ENCODE measurements at regions of chr1 and their contacts with region 1.

Region 1: GRCh38 chr1:225777583-225778336 is at the start of gene SRP9:
- DNase-seq: peak; percentile 99
- H3K4me3 Mint-ChIP-seq: no peak within 1 kb of the TSS
- H3K27ac Mint-ChIP-seq: no peak within 1 kb of the TSS
- H3K4me1 Mint-ChIP-seq: peaks cover 25% of the 10 kb centered on the region
- H3K27me3 Mint-ChIP-seq: no peaks in the 10 kb centered on the region
- total RNA-seq, gene SRP9: 294 to 314 TPM

Region 2: DNA sequence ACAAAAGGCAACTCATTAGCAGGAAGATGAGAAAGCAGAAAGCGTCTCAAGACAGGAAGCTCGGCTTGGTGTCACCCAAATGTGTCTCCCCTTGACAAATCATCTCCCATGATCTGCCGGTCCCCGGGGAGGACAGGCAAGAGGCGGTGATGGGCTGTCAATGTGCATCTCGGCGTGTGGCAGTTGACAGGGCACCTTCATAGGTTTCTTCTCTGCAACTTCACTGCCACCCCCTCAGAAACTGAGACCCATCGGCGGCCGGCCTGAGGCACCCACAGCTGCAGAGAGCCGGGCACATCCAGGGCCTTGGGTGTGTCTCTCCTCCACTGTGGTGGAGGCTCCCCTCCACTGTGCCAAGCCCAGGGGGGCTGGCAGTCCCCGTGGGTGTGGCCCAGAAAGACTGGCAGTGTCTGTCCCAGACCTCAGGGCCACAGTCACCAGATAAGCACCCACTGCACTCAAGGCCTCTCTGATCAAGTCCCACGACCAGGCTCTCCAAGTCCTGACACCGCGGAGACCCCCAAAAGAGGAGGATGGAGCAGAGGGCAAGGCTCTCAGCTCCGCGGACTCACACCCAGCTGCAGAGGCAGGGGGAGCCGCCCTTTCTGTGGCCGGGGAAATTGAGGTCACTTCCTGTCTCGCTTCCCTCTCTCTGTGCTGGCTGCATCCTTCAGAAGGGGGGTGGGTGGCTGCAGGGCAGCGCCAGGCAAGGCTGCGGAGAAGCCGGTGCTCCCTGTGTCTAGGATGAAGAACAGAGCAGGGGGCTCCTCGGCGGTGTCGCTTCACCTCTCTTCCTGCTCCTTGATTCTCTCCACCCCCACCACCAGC is 310.4 kb before region 1 on chr1:
- CTCF ChIA-PET with region 1: interaction called, 13 read pairs
- POLR2A ChIA-PET with region 1: interaction called, 15 read pairs
- intact Hi-C with region 1: no loop called
- DNase-seq: peak; percentile 91
- H3K4me3 Mint-ChIP-seq: peak overlapping the region; percentile 92
- H3K27ac Mint-ChIP-seq: peak overlapping the region; percentile 99
- H3K4me1 Mint-ChIP-seq: peaks cover 26% of the 10 kb centered on the region
- H3K27me3 Mint-ChIP-seq: no peaks in the 10 kb centered on the region

Region 3: DNA sequence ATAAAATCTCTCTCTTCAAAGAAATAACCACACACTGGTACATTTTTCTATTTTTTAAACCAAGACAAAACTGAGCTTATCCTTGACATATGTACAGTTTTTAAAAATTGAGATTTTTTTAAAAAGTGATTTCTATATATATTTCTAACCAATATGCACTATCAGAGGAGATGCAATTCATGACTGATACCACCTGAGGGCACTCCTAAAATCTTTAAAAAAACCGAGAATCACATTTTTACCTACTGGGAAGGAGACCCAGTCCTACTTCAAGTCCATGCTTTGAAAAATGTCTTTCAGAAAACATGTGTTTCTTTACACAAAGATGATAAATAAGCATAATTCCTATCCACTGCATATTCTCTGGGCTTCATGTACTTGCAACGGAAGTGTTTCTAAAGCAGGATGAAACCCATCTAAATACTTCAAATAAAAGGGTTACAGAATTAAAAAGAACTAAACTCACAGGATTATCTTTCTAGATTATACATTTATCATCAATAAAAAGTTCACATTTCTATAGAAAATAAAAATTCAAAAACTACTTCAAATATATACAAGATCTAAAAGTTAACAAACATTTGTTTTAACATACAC is 223.4 kb before region 1 on chr1:
- CTCF ChIA-PET with region 1: interaction called, 3 read pairs
- POLR2A ChIA-PET with region 1: no interaction called
- intact Hi-C with region 1: loop called (anchors 5 kb)
- DNase-seq: no peak
- H3K4me3 Mint-ChIP-seq: no peak overlapping the region
- H3K27ac Mint-ChIP-seq: no peak overlapping the region
- H3K4me1 Mint-ChIP-seq: no peaks in the 10 kb centered on the region
- H3K27me3 Mint-ChIP-seq: peaks cover 3% of the 10 kb centered on the region

Region 4: GRCh38 chr1:225809842-225810578 is 32.2 kb after region 1 on chr1 and contains the start of gene EPHX1:
- CTCF ChIA-PET with region 1: interaction called, 5 read pairs
- POLR2A ChIA-PET with region 1: interaction called, 5 read pairs
- intact Hi-C with region 1: loop called (anchors 2 kb)
- DNase-seq: peak; percentile 81
- H3K4me3 Mint-ChIP-seq: peak within 1 kb of the TSS; percentile 73
- H3K27ac Mint-ChIP-seq: no peak within 1 kb of the TSS
- H3K4me1 Mint-ChIP-seq: peaks cover 11% of the 10 kb centered on the region
- H3K27me3 Mint-ChIP-seq: peaks cover 2% of the 10 kb centered on the region
- total RNA-seq, gene EPHX1: 2.6 to 2.8 TPM

Region 5: DNA sequence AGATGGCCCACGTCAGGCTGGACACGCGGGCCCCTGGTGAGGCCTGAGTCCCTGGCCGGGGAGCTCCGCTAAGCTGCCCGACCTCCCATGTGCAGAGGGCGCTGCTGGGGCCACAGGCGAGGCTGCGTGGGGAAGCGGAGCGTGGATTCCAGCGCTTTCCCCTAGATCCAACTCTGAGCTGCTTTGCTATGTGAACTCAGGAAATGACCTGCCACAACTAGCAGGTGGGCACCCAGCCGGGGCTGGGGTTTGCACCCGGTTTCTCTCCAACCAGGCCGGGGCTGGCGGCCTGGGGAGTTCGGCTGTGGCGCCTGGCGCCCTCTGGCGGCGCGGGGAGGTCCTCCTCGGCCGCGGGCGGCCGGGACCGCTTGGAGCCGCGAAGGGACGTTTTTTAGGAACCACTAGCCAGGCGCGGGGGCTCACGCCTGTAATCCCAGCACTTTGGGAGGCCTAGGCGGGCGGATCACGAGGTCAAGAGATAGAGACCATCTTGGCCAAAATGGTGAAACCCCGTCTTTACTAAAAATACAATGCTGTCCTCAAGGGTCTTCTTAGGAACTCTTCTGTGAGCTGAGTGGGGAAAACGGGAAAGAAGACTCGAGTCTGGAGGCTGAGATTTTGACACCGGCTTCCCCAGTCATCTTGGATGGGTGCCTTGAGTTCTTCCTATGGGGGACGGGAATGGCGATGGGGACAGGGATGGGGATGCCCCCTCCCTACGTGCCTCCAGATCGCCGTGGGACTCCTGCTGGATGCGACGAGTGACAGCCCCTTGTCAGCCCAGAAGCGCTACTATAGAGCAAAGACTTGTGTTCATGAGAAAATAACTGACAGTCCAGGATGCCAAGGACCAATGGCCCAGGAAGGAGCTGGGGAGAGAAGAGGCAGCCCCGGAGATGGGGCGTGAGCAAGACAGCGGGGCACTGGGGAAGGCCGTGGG is 133.7 kb after region 1 on chr1:
- CTCF ChIA-PET with region 1: interaction called, 35 read pairs
- POLR2A ChIA-PET with region 1: interaction called, 6 read pairs
- intact Hi-C with region 1: no loop called
- DNase-seq: peak; percentile 80
- H3K4me3 Mint-ChIP-seq: no peak overlapping the region
- H3K27ac Mint-ChIP-seq: no peak overlapping the region
- H3K4me1 Mint-ChIP-seq: peaks cover 20% of the 10 kb centered on the region
- H3K27me3 Mint-ChIP-seq: no peaks in the 10 kb centered on the region

Region 6: DNA sequence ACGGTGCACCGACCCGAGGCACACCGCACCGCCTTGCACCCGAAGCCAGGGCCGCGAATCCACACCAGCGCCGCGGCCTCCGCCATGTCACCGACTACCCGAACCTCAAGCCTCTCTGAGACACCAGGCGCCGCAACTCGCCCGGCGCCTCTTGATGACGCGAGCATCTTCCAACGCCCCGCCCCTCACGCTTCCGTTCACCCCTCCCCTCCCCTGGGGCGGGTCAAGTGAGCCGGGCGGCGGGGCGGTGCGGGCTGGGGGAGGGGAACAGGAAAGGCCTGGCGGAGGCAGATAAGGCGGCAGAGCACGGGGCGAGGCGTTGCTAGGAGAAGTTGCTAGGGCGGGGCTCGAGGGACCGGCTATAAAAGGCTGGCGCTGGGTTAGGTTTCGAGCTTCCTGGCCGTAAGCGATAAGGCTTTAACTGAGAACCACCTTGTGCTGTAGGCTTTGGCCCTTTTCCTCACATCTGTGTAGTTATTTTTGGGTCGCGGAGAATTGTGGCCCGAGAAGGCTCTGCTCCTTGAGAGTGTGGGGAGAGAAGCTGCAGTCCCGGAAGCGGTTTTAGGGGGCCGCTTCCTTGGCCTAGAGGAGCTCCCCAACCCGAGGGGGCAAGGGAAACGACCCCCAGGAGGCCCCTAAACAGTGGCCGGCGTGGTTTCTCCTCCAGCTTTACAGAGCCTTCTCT is 221.6 kb after region 1 on chr1 and contains the start of gene SDE2:
- CTCF ChIA-PET with region 1: interaction called, 3 read pairs
- POLR2A ChIA-PET with region 1: interaction called, 5 read pairs
- intact Hi-C with region 1: loop called (anchors 1 kb)
- DNase-seq: peak; percentile 100
- H3K4me3 Mint-ChIP-seq: peak within 1 kb of the TSS; percentile 100
- H3K27ac Mint-ChIP-seq: peak within 1 kb of the TSS; percentile 96
- H3K4me1 Mint-ChIP-seq: peaks cover 66% of the 10 kb centered on the region
- H3K27me3 Mint-ChIP-seq: no peaks in the 10 kb centered on the region
- total RNA-seq, gene SDE2: 18.0 to 18.2 TPM